Posterior vena cava (tissue), 2 donors: ENCODE measurements at regions of chr15 and their contacts with region 1.

Region 1: GRCh38 chr15:31488426-31489204 is 162.0 kb downstream of the KLF13 start:
- DNase-seq: peak; percentile 91

Region 2: DNA sequence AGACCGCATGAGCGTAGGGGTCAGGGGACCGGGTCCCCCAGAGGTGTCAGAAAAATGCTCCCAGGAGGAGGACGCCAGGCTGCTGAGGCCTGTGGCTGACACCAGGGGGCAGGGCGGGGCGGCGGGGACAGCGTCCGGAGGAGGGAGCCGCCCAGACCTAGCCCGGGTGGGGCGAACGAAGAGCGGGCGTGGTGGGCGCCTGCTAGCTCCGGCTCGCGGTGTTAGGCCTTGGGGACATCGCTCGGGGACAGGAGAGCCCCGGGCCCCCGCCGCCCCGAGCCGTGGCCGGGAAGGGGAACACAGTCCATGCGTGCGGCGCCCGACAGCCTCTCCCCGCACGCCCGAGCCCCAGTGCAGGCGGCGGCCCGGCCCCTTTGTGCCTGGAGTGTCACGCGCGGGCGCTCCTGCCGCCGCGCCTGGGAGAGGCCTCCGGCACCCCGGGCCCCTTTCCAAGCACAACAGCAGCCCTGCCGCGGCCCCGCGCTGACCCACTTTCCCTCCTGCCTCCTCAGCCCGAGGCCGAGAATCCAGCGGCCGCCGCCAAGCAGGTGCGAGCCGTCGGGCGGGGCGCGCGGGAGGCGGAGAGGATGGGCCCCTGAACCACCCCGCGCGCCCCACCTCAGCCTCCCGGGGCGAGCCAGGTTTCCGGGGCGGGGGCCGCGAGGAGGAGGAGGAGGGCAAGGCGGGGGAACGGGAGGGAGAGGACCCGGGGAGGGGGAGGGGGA is 273.0 kb before region 1 on chr15:
- intact Hi-C with region 1: loop called (anchors 10 kb)
- DNase-seq: peak; percentile 96

Region 3: GRCh38 chr15:31236184-31237042 is 252.2 kb before region 1 on chr15:
- intact Hi-C with region 1: loop called in 1 of 2 experiments (anchors 5 kb)
- DNase-seq: peak; percentile 90

Region 4: GRCh38 chr15:31365655-31366127 is 122.9 kb before region 1 on chr15:
- intact Hi-C with region 1: loop called in 1 of 2 experiments (anchors 10 kb)
- DNase-seq: peak; percentile 98